Aorta (tissue), 5 donors: ENCODE measurements at regions of chr6 and their contacts with region 1.

Region 1: DNA sequence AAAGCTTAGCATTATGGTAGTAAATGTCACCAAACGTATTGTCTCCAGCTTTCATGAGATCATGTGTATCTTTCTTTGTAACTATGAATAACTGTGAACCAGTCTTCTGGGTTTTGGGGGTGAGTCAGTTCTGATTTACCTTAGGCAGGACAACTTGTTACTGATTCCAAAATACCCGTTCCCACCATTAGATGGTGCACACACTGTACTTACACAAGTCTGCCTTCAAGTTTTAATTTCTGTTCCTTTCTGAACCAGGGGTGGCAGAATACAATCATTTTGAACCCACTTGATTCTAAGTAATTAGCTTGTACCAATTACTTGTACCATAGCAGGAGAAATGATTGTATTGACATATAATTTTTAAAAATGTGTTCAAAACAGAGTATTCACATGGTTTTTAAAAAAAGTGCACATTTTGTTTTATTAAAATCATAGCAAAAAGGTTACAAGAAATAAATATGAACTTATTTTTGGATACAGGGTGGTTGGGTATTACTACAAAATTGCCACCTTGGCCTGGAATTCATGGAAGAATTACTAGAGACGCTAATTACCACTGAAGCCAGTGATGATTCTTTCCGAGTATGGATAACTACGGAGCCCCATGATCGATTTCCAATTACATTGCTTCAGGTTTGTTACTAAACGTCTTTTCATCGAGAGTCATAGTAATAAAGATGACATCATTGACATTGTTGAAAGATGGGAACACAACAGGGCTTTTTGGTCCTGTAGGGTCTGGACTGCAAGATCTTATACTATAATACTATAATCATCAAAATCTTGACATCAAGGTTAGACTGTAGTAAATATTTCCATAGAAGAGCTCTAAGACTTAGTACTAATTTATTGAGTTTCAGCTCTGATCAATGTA is 75.2 kb upstream of the GLP1R start:
- DNase-seq: no peak
- ATAC-seq: no peak
- H3K4me3 ChIP-seq: no peak overlapping the region
- H3K27ac ChIP-seq: no peak overlapping the region
- H3K4me1 ChIP-seq: no peaks in the 10 kb centered on the region
- H3K27me3 ChIP-seq: peaks cover 0 to 2% of the 10 kb centered on the region in 2 donors

Region 2: DNA sequence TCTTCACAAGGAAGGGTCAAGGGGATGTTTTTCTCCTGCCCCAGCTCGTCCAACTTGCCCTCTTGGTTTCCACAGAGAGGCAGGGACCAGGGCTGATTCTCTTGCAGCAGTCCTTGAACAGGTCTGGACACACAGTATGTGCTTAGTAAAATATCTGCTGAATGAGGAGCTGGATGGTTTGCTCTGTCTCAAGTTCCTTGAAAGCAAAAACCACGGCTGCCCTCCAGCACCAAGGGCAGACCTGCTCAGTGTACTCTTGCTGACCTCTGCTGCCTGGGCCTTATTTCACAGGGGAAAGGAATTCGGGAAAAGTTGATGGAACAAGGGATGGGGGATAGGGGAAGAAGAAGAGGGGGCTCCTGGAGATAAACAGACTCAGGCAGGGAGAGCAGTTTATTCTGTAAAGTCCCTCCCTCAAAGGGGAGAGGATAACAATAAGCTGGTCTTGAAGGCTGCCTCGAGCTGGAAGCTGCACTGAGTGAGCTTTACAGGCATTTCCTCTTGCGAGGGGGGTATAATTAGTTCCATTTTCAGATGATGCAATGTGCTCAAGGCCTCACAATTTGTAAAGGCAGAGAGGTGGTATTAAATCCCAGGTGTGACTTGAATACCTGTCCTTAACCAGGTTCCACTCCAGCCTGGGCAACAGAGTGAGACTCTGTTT is 245.6 kb after region 1 on chr6:
- intact Hi-C with region 1: no loop called
- DNase-seq: no peak
- ATAC-seq: no peak
- H3K4me3 ChIP-seq: no peak overlapping the region
- H3K27ac ChIP-seq: no peak overlapping the region
- H3K4me1 ChIP-seq: no peaks in the 10 kb centered on the region
- H3K27me3 ChIP-seq: no peaks in the 10 kb centered on the region

Region 3: GRCh38 chr6:39296745-39297640 is 323.6 kb after region 1 on chr6:
- intact Hi-C with region 1: loop called (anchors 10 kb)
- DNase-seq: peak; percentile 74 to 90
- ATAC-seq: peak; percentile 89
- H3K4me3 ChIP-seq: no peak overlapping the region
- H3K27ac ChIP-seq: no peak overlapping the region
- H3K4me1 ChIP-seq: no peaks in the 10 kb centered on the region
- H3K27me3 ChIP-seq: no peaks in the 10 kb centered on the region